HEK293 (cell line): ENCODE measurements at regions of chr5 and their contacts with region 1.

Region 1: DNA sequence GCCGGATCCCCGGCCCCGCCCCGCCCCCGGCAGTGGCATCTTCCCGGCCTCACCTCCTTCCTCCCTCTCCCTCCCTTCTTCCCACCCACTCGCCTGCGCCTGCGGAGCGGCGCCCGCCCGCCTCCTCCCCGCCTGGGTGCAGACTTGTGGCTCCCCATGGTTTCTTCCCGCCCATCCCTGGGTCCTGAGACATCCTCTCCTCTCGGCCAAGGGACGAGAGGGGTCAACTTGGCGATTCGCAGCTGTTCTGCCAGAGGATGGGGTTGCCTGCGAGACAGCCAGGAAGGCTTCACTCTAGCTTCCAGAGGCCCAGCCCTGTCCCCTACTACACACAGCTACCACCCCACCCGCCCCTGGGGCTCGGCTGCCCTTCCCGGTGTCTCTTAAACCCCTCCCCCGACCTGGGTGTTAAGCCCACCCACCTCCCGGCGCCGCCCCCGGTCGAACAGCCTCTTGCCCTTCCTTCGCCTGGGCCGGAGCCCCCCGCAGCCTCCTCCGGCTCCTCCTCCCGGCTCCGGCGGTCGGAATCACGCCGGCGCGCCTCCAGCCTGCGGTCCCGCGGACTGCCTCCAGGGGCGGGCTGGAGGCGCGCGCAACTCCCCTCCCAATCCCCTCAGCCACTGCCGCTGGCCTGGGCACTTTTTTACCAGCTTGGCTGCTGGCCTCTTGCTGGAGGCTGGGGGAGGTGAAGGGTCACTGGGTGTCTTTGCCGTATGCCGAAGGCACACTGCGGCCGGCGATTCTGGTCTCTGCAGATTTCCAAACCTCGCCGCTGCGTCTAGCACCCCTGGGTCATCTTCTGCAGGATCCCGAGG is 1.9 kb downstream of the JADE2 start:
- H3K4me3 ChIP-seq: peak overlapping the region; percentile 69
- H3K27ac ChIP-seq: peak overlapping the region; percentile 65
- H3K4me1 ChIP-seq: peaks cover 4% of the 10 kb centered on the region
- CTCF ChIP-seq: peak; percentile 83

Region 2: GRCh38 chr5:134397196-134397595 is 130.2 kb before region 1 on chr5:
- CTCF ChIA-PET with region 1: interaction called, 13 read pairs
- POLR2A ChIA-PET with region 1: no interaction called
- H3K4me3 ChIP-seq: no peak overlapping the region
- H3K27ac ChIP-seq: no peak overlapping the region
- H3K4me1 ChIP-seq: no peaks in the 10 kb centered on the region
- CTCF ChIP-seq: no peak

Region 3: GRCh38 chr5:134411546-134412266 is 115.6 kb before region 1 on chr5 and contains the start of gene CDKN2AIPNL:
- CTCF ChIA-PET with region 1: interaction called, 17 read pairs
- POLR2A ChIA-PET with region 1: interaction called, 8 read pairs
- H3K4me3 ChIP-seq: peak within 1 kb of the TSS; percentile 91
- H3K27ac ChIP-seq: peak within 1 kb of the TSS; percentile 63; the same call in 1 of the 2 replicates
- H3K4me1 ChIP-seq: peaks cover 10% of the 10 kb centered on the region
- CTCF ChIP-seq: peak; percentile 97

Region 4: GRCh38 chr5:134465816-134466240 is 61.5 kb before region 1 on chr5:
- CTCF ChIA-PET with region 1: interaction called, 11 read pairs
- POLR2A ChIA-PET with region 1: interaction called, 39 read pairs
- H3K4me3 ChIP-seq: peak overlapping the region; percentile 54
- H3K27ac ChIP-seq: peak overlapping the region; percentile 90
- H3K4me1 ChIP-seq: peaks cover 3% of the 10 kb centered on the region
- CTCF ChIP-seq: peak; percentile 48; the same call in 1 of the 2 replicates

Region 5: DNA sequence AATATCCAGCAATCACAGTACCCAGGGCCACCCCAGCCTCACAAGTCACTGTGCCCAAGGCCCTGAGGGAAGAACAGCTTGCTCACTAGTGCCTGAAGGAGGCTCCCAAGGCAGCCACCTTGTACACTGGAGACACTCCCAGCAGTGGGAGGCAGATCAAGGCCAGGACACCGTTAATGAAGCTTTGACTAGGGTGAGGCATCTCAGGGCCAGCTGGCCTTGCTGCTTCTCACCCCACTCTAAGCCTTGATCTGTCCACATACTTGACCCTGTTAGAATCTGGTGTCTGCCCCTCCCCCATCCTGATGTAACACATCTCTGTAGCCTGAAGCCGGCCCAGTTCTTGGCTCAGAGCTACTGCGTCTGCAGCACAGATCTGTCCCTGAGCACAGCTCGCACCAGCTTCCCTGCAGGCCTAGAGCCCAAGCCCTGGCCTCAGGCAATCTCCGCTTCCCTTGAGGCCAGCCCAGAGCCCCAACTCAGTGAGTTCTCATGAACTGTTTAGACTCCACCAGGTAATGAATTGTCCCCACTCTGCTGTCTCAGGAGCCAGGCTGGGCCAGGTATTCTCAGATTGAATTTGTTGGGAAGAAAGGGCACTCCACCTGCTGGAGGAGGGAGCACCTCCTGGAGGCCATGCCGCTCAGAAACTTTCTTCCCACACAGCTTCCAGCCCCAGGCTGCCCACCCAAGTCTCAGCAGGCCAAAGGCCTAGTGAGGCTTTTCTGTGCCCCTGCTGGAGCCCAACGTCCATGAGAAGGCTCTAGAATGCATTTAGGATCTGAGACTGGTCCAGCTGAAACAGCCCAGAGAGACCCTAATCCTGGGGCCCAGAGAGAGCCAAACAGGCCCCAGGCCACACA is 15.3 kb before region 1 on chr5:
- CTCF ChIA-PET with region 1: interaction called, 6 read pairs
- POLR2A ChIA-PET with region 1: interaction called, 15 read pairs
- H3K4me3 ChIP-seq: no peak overlapping the region
- H3K27ac ChIP-seq: no peak overlapping the region
- H3K4me1 ChIP-seq: peaks cover 9% of the 10 kb centered on the region; the same call in 1 of the 2 replicates
- CTCF ChIP-seq: peak; percentile 40; the same call in 1 of the 2 replicates